ENCODE measurements at regions of chr10 and their contacts with region 1.

Region 1: DNA sequence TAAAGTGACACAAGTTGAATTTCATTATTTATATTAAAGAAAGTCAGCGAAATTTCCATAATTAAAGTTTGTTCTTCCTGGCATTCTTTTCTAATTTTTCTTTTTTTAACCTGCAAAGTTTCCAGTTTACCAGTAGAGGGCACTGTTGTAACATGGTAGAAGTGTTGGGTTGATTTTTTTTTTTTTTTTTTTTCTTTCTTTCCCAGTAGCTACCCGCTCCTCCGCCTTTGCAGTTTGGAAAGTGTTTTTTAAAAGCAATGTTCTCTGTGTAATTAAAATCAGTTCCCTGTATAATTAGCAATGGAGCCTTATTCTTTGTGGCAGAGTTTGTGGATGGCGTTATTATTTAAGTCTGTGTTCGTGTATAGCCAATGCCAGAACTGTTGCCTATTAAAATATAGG is 53.7 kb downstream of the TAF3 start:
- DNase-seq: peak; percentile 62
- H3K4me3 ChIP-seq: peak overlapping the region; percentile 46
- H3K27ac ChIP-seq: peak overlapping the region; percentile 21
- H3K4me1 ChIP-seq: peaks cover 7% of the 10 kb centered on the region
- H3K27me3 ChIP-seq: no peaks in the 10 kb centered on the region
- CTCF ChIP-seq: peak; percentile 85

Region 2: DNA sequence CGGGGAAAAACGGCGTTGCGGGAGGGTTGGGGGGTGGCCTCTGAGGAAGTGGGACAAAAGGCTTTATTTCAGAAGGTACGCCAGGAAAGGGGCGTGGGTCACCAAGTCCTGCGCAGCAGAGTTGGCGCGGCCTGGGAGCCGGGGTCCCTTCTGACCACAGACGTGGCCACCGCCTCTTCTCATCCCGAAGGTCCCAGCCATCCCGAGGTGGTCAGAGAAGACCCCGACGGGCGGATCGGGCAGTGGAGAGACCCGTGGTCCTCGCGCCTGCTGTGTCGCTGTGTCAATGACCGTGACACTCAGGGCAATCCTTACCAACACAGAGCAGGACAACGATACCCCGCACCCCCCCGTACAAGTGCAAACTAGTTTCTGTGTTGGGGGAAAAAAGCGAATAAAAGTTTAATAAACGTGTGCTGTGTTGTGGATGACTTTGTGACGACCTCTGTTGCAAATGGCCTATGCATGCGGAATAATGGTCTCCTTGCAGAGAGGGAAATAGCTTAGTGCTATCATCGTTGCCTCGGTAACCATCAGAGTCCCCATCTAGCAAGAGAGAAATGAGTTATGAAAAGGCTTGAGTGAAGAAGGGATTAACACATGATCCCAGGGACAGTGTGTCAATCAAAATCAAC is 163.1 kb after region 1 on chr10:
- CTCF ChIA-PET with region 1: no interaction called
- POLR2A ChIA-PET with region 1: no interaction called
- intact Hi-C with region 1: loop called (anchors 5 kb)
- DNase-seq: peak; percentile 68
- H3K4me3 ChIP-seq: peak overlapping the region; percentile 32
- H3K27ac ChIP-seq: no peak overlapping the region
- H3K4me1 ChIP-seq: peaks cover 23% of the 10 kb centered on the region
- H3K27me3 ChIP-seq: peaks cover 72% of the 10 kb centered on the region
- CTCF ChIP-seq: no peak

Region 3: DNA sequence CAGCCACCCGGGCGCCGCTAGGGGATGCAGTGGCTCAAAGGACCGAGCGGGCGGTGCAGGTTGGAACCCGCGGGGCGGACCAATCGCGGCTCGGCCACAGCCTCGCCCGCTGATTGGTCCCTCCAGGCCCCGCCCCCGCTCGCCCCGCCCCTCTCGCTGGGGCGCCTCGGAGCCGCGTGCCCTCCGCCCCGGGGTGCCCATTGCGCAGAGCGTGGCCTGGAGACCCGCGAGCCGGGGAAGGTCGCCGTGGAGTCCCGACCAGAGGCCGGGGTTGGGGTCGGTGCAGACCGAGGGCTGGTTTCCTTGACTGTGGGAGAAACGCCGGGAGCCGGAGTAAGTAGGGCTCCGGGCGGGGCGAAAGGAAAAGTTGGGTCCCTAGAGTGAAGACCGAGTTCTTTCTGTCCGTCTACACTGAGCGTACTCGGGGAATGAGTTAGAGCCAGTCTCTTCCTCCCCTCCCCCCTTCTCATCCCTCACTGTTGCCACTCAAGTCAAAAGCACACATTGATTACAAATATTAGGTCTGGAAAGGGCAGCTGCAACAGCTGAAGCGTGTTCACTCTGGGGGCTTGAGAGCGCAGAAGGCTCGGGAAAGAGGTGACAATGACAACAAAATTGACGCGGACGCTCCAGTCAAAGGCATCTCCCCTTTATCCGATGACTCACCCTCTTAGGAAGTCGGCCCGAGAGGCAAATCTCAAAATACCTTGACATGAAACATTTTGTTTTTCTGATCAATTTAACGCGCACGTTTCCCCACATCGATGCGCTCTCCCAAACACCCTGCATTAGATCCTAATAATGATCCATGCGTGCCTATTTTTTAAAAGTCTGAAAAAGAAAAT is 181.6 kb after region 1 on chr10:
- CTCF ChIA-PET with region 1: no interaction called
- POLR2A ChIA-PET with region 1: no interaction called
- intact Hi-C with region 1: loop called (anchors 5 kb)
- DNase-seq: peak; percentile 92
- H3K4me3 ChIP-seq: peak overlapping the region; percentile 55
- H3K27ac ChIP-seq: peak overlapping the region; percentile 22
- H3K4me1 ChIP-seq: peaks cover 22% of the 10 kb centered on the region
- H3K27me3 ChIP-seq: peaks cover 47% of the 10 kb centered on the region
- CTCF ChIP-seq: no peak

Region 4: DNA sequence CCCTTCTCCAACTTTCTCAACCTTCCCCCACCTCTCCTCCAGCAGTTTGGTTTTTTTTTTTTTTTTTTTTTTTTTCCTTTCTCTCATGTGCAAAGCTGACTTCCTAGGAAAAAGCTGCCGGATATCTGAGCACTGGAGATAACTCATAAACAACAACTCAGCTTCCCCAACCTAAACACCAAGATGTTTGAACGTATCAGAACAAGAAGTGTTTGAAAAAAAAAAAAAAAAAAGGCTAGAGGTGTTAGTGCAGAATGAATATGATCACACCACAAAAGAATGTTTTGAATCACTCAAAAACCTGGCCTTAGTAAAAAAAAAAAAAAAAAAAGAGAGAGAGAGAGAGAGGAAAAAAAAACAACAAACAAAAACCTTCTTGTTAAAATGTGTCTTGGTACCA is 193.6 kb after region 1 on chr10:
- CTCF ChIA-PET with region 1: no interaction called
- POLR2A ChIA-PET with region 1: no interaction called
- intact Hi-C with region 1: no loop called
- DNase-seq: no peak
- H3K4me3 ChIP-seq: no peak overlapping the region
- H3K27ac ChIP-seq: no peak overlapping the region
- H3K4me1 ChIP-seq: peaks cover 3% of the 10 kb centered on the region
- H3K27me3 ChIP-seq: no peaks in the 10 kb centered on the region
- CTCF ChIP-seq: no peak

Region 5: GRCh38 chr10:8473205-8473604 is 601.2 kb after region 1 on chr10:
- CTCF ChIA-PET with region 1: no interaction called
- POLR2A ChIA-PET with region 1: no interaction called
- intact Hi-C with region 1: loop called (anchors 10 kb)
- DNase-seq: peak; percentile 27
- H3K4me3 ChIP-seq: no peak overlapping the region
- H3K27ac ChIP-seq: no peak overlapping the region
- H3K4me1 ChIP-seq: no peaks in the 10 kb centered on the region
- H3K27me3 ChIP-seq: no peaks in the 10 kb centered on the region
- CTCF ChIP-seq: peak; percentile 48; the same call in 1 of the 2 replicates

Region 6: DNA sequence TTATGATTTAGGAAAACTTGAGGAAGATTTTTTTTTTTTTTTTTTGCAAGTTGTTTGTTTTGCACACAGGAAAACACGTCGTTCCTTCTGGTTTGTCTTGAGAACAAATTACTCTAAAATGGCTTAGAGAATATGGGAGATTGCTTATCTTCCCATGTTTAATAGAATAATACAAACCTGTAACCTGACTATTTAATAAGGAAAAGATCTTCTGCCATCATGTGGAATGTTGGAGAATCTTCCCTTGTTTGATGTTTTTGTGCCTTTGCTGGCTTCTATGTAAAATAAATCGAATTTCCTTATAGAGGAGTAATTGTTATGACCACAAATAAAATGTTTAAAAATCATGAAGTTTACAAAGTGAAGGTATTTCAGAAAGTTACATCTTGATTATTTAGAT is 1001.3 kb after region 1 on chr10:
- CTCF ChIA-PET with region 1: no interaction called
- POLR2A ChIA-PET with region 1: no interaction called
- intact Hi-C with region 1: loop called (anchors 5 kb)
- DNase-seq: peak; percentile 11
- H3K4me3 ChIP-seq: no peak overlapping the region
- H3K27ac ChIP-seq: no peak overlapping the region
- H3K4me1 ChIP-seq: no peaks in the 10 kb centered on the region
- H3K27me3 ChIP-seq: no peaks in the 10 kb centered on the region
- CTCF ChIP-seq: no peak; the same call in 1 of the 2 replicates

Region 7: GRCh38 chr10:9209105-9209798 is 1337.2 kb after region 1 on chr10:
- CTCF ChIA-PET with region 1: interaction called, 7 read pairs
- POLR2A ChIA-PET with region 1: no interaction called
- intact Hi-C with region 1: loop called (anchors 1 kb)
- DNase-seq: peak; percentile 70
- H3K4me3 ChIP-seq: no peak overlapping the region
- H3K27ac ChIP-seq: no peak overlapping the region
- H3K4me1 ChIP-seq: no peaks in the 10 kb centered on the region
- H3K27me3 ChIP-seq: no peaks in the 10 kb centered on the region
- CTCF ChIP-seq: peak; percentile 88

Region 8: GRCh38 chr10:9302120-9302746 is 1430.2 kb after region 1 on chr10:
- CTCF ChIA-PET with region 1: no interaction called
- POLR2A ChIA-PET with region 1: interaction called, 3 read pairs
- intact Hi-C with region 1: loop called (anchors 2 kb)
- DNase-seq: peak; percentile 74
- H3K4me3 ChIP-seq: no peak overlapping the region
- H3K27ac ChIP-seq: no peak overlapping the region
- H3K4me1 ChIP-seq: no peaks in the 10 kb centered on the region
- H3K27me3 ChIP-seq: no peaks in the 10 kb centered on the region
- CTCF ChIP-seq: peak; percentile 53

Measured in A673 (cell line).